Panc1 (cell line): ENCODE measurements at regions of chr6 and their contacts with region 1.

Region 1: GRCh38 chr6:154030646-154031045 is 8.4 kb upstream of the OPRM1 start:
- DNase-seq: no peak
- ATAC-seq: no peak
- H3K4me3 ChIP-seq: no peak overlapping the region
- H3K27ac ChIP-seq: no peak overlapping the region
- H3K4me1 ChIP-seq: no peaks in the 10 kb centered on the region
- H3K27me3 ChIP-seq: no peaks in the 10 kb centered on the region
- CTCF ChIP-seq: no peak

Region 2: DNA sequence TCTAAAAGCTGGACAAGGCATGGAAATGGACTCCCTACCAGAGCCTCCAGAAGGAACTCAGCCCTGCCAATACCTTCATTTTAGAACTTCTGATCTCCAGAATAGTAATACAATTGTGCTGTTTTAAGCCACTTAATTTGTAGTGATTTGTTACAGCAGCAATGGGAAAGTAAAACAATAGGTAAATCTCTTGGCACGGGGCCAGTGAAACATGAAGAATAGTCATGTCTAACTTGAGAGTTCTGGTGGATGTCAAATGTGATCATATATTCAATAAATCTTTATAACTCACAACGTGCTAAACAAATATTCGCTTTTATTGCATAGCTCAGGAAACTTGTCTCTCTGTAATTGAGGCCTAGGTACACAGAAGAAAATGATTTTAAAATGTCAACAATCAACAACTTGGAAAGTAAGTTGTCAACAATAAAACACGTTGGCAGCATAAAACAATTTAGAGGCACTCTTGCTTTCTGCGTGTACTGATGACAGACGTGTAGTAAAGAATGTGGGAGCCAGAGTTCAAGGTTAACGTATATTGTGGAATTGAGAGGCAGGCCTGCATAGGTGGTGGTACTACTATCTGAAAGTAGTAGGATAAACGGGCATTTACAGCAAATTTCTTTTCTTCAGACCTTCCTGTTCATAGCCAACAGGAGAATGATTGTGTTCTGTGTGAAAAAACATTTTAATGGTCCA is 132.1 kb before region 1 on chr6:
- CTCF ChIA-PET with region 1: interaction called, 11 read pairs
- POLR2A ChIA-PET with region 1: no interaction called
- in situ Hi-C with region 1: no loop called
- intact Hi-C with region 1: no loop called
- DNase-seq: no peak
- ATAC-seq: no peak
- H3K4me3 ChIP-seq: no peak overlapping the region
- H3K27ac ChIP-seq: no peak overlapping the region
- H3K4me1 ChIP-seq: no peaks in the 10 kb centered on the region
- H3K27me3 ChIP-seq: no peaks in the 10 kb centered on the region
- CTCF ChIP-seq: no peak

Region 3: GRCh38 chr6:154070657-154071056 is 40.0 kb after region 1 on chr6:
- CTCF ChIA-PET with region 1: no interaction called
- POLR2A ChIA-PET with region 1: no interaction called
- in situ Hi-C with region 1: no loop called
- intact Hi-C with region 1: no loop called
- DNase-seq: no peak
- ATAC-seq: no peak
- H3K4me3 ChIP-seq: no peak overlapping the region
- H3K27ac ChIP-seq: no peak overlapping the region
- H3K4me1 ChIP-seq: no peaks in the 10 kb centered on the region
- H3K27me3 ChIP-seq: no peaks in the 10 kb centered on the region
- CTCF ChIP-seq: no peak